ENCODE measurements at regions of chr14 and their contacts with region 1.

Region 1: GRCh38 chr14:74612350-74613021 is 449 bp upstream of the LTBP2 start:
- DNase-seq: peak; percentile 86
- H3K4me3 ChIP-seq: peak overlapping the region; percentile 34 to 64 (median 57)
- H3K27ac ChIP-seq: peak overlapping the region; percentile 5 to 57 (median 34)
- H3K4me1 ChIP-seq: peaks cover 0 to 17% (median 14%) of the 10 kb centered on the region in 4 donors
- H3K27me3 ChIP-seq: peaks cover 7 to 67% (median 18%) of the 10 kb centered on the region in 3 donors
- CTCF ChIP-seq: peak; percentile 10 to 50 (median 27)
- EP300 ChIP-seq: no peak
- POLR2A ChIP-seq: no peak

Region 2: GRCh38 chr14:74362361-74362915 is 250.0 kb before region 1 on chr14:
- intact Hi-C with region 1: loop called (anchors 2 kb)
- DNase-seq: peak; percentile 88
- H3K4me3 ChIP-seq: no peak overlapping the region
- H3K27ac ChIP-seq: no peak overlapping the region
- H3K4me1 ChIP-seq: peaks cover 0 to 4% (median 0%) of the 10 kb centered on the region in 4 donors
- H3K27me3 ChIP-seq: peaks cover 0 to 19% (median 0%) of the 10 kb centered on the region in 3 donors
- CTCF ChIP-seq: peak; percentile 66 to 97 (median 88)
- EP300 ChIP-seq: no peak
- POLR2A ChIP-seq: no peak

Region 3: GRCh38 chr14:74501135-74501614 is 111.3 kb before region 1 on chr14:
- intact Hi-C with region 1: loop called (anchors 1 kb)
- DNase-seq: peak; percentile 92
- H3K4me3 ChIP-seq: no peak overlapping the region
- H3K27ac ChIP-seq: peak overlapping the region in 1 of 4 donors; percentile 5
- H3K4me1 ChIP-seq: peaks cover 0 to 4% (median 0%) of the 10 kb centered on the region in 4 donors
- H3K27me3 ChIP-seq: no peaks in the 10 kb centered on the region
- CTCF ChIP-seq: peak; percentile 20 to 61 (median 46)
- EP300 ChIP-seq: no peak
- POLR2A ChIP-seq: no peak

Measured in sigmoid colon (tissue), 7 donors.